ENCODE measurements at regions of chr20 and their contacts with region 1.

Region 1: GRCh38 chr20:49245921-49246740 is 26.9 kb downstream of the DDX27 start:
- DNase-seq: peak; percentile 59
- H3K4me3 ChIP-seq: no peak overlapping the region
- H3K27ac ChIP-seq: no peak overlapping the region
- H3K4me1 ChIP-seq: no peaks in the 10 kb centered on the region
- CTCF ChIP-seq: peak; percentile 84

Region 2: DNA sequence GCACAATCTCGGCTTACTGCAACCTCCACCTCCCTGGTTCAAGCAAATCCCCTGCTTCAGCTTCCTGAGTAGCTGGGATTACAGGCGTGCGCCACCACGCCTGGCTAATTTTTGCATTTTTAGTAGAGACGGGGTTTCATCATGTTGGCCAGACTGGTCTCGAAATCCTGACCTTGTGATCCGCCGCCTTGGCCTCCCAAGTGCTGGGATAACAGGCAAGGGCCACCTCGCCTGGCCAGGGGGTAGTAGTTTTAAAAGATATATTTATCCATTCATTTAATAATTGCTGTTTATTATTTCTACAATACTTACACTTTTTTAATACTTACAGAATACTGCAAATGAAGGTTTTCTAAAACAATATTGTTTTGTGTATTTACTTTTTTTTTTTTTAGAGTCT is 42.4 kb before region 1 on chr20:
- CTCF ChIA-PET with region 1: no interaction called
- POLR2A ChIA-PET with region 1: no interaction called
- intact Hi-C with region 1: no loop called
- DNase-seq: no peak
- H3K4me3 ChIP-seq: no peak overlapping the region
- H3K27ac ChIP-seq: no peak overlapping the region
- H3K4me1 ChIP-seq: no peaks in the 10 kb centered on the region
- CTCF ChIP-seq: no peak

Region 3: GRCh38 chr20:49303065-49303552 is 57.0 kb after region 1 on chr20:
- CTCF ChIA-PET with region 1: no interaction called
- POLR2A ChIA-PET with region 1: no interaction called
- intact Hi-C with region 1: no loop called
- DNase-seq: no peak
- H3K4me3 ChIP-seq: no peak overlapping the region
- H3K27ac ChIP-seq: no peak overlapping the region
- H3K4me1 ChIP-seq: peaks cover 3% of the 10 kb centered on the region
- CTCF ChIP-seq: no peak

Region 4: GRCh38 chr20:49323622-49324238 is 77.6 kb after region 1 on chr20:
- CTCF ChIA-PET with region 1: no interaction called
- POLR2A ChIA-PET with region 1: no interaction called
- intact Hi-C with region 1: loop called (anchors 2 kb)
- DNase-seq: peak; percentile 52
- H3K4me3 ChIP-seq: no peak overlapping the region
- H3K27ac ChIP-seq: no peak overlapping the region
- H3K4me1 ChIP-seq: peaks cover 8% of the 10 kb centered on the region
- CTCF ChIP-seq: peak; percentile 56

Measured in OCI-LY7 (cell line).